ENCODE measurements at regions of chrX and their contacts with region 1.

Region 1: DNA sequence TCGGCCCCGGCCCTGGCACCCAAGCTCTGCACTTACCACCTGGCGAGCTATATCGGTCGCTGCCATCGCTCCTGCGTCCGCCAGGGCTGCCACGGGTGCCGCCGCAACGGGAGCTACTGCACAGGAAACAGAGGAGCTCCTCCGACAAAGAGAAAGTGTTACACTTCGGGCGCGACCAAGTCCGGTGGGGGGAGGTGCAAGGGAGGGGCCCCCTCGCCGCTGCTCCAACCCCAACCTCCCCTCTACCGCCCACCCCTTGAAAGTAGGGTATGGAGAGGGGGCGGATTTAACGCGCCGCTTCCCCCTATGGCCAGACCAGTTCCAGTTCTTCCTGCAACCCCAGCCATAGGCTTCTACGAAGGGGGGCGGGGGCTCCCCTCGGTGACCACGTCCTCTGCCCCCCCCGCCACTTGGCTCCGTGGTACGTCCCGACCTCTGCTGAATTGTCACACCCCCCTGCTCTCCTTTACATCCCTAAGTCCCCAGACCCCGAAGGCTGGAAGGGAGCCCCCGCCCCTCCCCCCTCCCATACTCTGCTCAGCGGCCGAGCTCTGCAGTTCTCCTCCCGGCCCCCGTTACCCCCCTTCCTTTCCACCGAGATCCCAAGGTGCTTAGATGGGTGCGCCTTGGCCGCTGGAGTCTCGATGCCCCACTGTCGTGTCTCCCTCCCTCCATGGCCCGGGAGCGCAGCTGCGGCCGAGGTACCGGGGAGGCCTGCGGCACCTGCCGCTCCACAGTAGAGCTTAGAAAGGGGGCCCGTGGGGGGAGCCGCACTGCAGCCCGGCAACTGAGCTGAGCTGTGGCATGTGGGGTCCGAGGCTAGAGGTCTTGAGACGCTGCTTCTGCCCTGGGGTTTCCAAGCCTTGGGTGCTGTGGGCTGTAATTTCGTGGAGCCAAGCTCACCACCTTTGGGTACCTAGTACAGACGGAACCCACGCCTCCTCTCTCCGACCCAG is at the start of gene SEPTIN6:
- DNase-seq: peak; percentile 68 to 91 (median 83)
- ATAC-seq: peak; percentile 57
- H3K4me3 ChIP-seq: peak within 1 kb of the TSS; percentile 81
- H3K4me3 Mint-ChIP-seq: peak within 1 kb of the TSS; percentile 97
- H3K27ac ChIP-seq: peak within 1 kb of the TSS; percentile 64 to 85
- H3K27ac Mint-ChIP-seq: peak within 1 kb of the TSS; percentile 96
- H3K4me1 ChIP-seq: peaks cover 27% of the 10 kb centered on the region
- H3K4me1 Mint-ChIP-seq: peaks cover 22% of the 10 kb centered on the region
- H3K27me3 ChIP-seq: no peaks in the 10 kb centered on the region
- H3K27me3 Mint-ChIP-seq: no peaks in the 10 kb centered on the region
- CTCF ChIP-seq: no peak
- total RNA-seq, gene SEPTIN6: 132 to 134 TPM

Region 2: GRCh38 chrX:119655125-119655524 is 38.2 kb before region 1 on chrX:
- CTCF ChIA-PET with region 1: interaction called, 10 read pairs
- POLR2A ChIA-PET with region 1: interaction called, 22 read pairs
- intact Hi-C with region 1: loop called (anchors 2 to 5 kb)
- DNase-seq: peak in 12 of 14 experiments; percentile 18 to 70 (median 49)
- ATAC-seq: peak; percentile 51
- H3K4me3 ChIP-seq: no peak overlapping the region
- H3K4me3 Mint-ChIP-seq: peak overlapping the region; percentile 56
- H3K27ac ChIP-seq: peak overlapping the region; percentile 29 to 64
- H3K27ac Mint-ChIP-seq: peak overlapping the region; percentile 90
- H3K4me1 ChIP-seq: peaks cover 24% of the 10 kb centered on the region
- H3K4me1 Mint-ChIP-seq: peaks cover 48% of the 10 kb centered on the region
- H3K27me3 ChIP-seq: no peaks in the 10 kb centered on the region
- H3K27me3 Mint-ChIP-seq: no peaks in the 10 kb centered on the region
- CTCF ChIP-seq: no peak

Region 3: GRCh38 chrX:119672242-119672837 is 21.0 kb before region 1 on chrX:
- CTCF ChIA-PET with region 1: interaction called, 42 read pairs
- POLR2A ChIA-PET with region 1: interaction called, 199 read pairs
- intact Hi-C with region 1: no loop called
- DNase-seq: no peak
- ATAC-seq: no peak
- H3K4me3 ChIP-seq: no peak overlapping the region
- H3K4me3 Mint-ChIP-seq: peak overlapping the region; percentile 10
- H3K27ac ChIP-seq: peak overlapping the region in 1 of 2 donors; percentile 29
- H3K27ac Mint-ChIP-seq: peak overlapping the region; percentile 72
- H3K4me1 ChIP-seq: peaks cover 57% of the 10 kb centered on the region
- H3K4me1 Mint-ChIP-seq: peaks cover 47% of the 10 kb centered on the region
- H3K27me3 ChIP-seq: no peaks in the 10 kb centered on the region
- H3K27me3 Mint-ChIP-seq: no peaks in the 10 kb centered on the region
- CTCF ChIP-seq: no peak

Region 4: GRCh38 chrX:119753571-119754257 is 60.4 kb after region 1 on chrX:
- CTCF ChIA-PET with region 1: interaction called, 4 read pairs
- POLR2A ChIA-PET with region 1: interaction called, 78 read pairs
- intact Hi-C with region 1: loop called in 1 of 2 experiments (anchors 2 kb)
- DNase-seq: peak in 11 of 14 experiments; percentile 14 to 89 (median 48)
- ATAC-seq: peak; percentile 65
- H3K4me3 ChIP-seq: no peak overlapping the region
- H3K4me3 Mint-ChIP-seq: peak overlapping the region; percentile 91
- H3K27ac ChIP-seq: peak overlapping the region in 1 of 2 donors; percentile 48
- H3K27ac Mint-ChIP-seq: peak overlapping the region; percentile 97
- H3K4me1 ChIP-seq: peaks cover 52% of the 10 kb centered on the region
- H3K4me1 Mint-ChIP-seq: peaks cover 44% of the 10 kb centered on the region
- H3K27me3 ChIP-seq: no peaks in the 10 kb centered on the region
- H3K27me3 Mint-ChIP-seq: no peaks in the 10 kb centered on the region
- CTCF ChIP-seq: peak; percentile 40

Region 5: DNA sequence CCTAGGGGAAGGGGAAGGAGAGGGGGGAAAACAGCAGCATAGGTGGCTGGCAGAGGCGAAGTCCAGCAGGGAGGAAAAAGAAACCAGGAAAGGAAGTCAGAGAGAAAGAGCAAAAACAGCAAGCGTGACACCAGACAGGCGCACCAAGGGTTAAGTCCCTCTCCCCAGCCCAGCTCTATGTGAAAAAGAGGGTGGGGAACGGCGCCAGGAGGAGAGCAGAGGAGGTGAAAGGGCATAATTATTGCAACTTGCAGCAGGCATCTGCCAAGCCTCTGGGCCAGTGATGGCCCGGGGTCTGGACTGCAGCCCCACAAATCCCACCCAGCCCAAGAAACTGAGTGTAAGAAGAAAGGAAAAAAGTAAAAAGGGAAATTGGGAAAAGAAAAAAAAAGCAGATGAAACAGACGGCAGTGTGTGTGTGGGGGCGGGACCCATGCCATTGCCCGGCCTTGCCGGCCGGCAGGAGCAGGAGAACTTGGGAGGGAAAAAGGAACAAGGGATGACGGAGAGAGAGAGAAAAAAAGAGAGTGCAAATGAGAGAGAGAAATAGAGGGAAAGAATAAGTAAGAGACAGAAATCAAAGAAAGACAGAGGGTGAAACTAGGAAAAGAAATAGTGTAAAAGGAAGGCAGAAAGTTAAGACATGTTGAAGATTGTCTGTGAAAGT is 451.0 kb after region 1 on chrX:
- CTCF ChIA-PET with region 1: no interaction called
- POLR2A ChIA-PET with region 1: no interaction called
- intact Hi-C with region 1: no loop called
- DNase-seq: no peak
- ATAC-seq: no peak
- H3K4me3 ChIP-seq: no peak overlapping the region
- H3K4me3 Mint-ChIP-seq: no peak overlapping the region
- H3K27ac ChIP-seq: no peak overlapping the region
- H3K27ac Mint-ChIP-seq: no peak overlapping the region
- H3K4me1 ChIP-seq: peaks cover 9% of the 10 kb centered on the region
- H3K4me1 Mint-ChIP-seq: peaks cover 10% of the 10 kb centered on the region
- H3K27me3 ChIP-seq: no peaks in the 10 kb centered on the region
- H3K27me3 Mint-ChIP-seq: no peaks in the 10 kb centered on the region
- CTCF ChIP-seq: no peak

Measured in CD4-positive, alpha-beta T cell (primary cell).